Calu3 (cell line): ENCODE measurements at regions of chr14 and their contacts with region 1.

Region 1: GRCh38 chr14:37340355-37340754 is 142.6 kb downstream of the MIPOL1 start:
- DNase-seq: peak; percentile 6
- H3K4me3 Mint-ChIP-seq: no peak overlapping the region
- H3K27ac Mint-ChIP-seq: no peak overlapping the region
- H3K4me1 Mint-ChIP-seq: no peaks in the 10 kb centered on the region
- H3K27me3 Mint-ChIP-seq: no peaks in the 10 kb centered on the region
- CTCF ChIP-seq: peak; percentile 24

Region 2: GRCh38 chr14:37278636-37279538 is 61.5 kb before region 1 on chr14:
- CTCF ChIA-PET with region 1: no interaction called
- intact Hi-C with region 1: no loop called
- DNase-seq: no peak
- H3K4me3 Mint-ChIP-seq: no peak overlapping the region
- H3K27ac Mint-ChIP-seq: no peak overlapping the region
- H3K4me1 Mint-ChIP-seq: no peaks in the 10 kb centered on the region
- H3K27me3 Mint-ChIP-seq: no peaks in the 10 kb centered on the region
- CTCF ChIP-seq: no peak

Region 3: DNA sequence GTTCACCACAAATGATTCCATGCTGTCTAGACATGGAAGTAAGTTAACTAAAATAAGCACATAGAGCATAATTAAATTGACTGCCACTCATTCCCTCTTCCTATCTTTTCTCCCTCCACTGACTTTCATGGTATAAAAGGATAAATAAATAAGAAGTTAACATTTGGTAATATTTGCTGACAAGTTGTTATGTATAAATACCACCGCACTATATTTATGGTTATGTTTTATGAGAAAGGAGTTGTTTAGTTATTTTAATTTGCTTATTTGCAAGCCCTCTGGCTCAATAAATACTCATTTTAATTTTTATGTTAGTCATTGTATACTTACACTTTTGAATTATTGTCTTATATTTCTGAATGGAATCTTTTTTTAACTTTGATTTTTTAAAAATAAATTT is 29.1 kb before region 1 on chr14:
- CTCF ChIA-PET with region 1: no interaction called
- intact Hi-C with region 1: no loop called
- DNase-seq: no peak
- H3K4me3 Mint-ChIP-seq: no peak overlapping the region
- H3K27ac Mint-ChIP-seq: no peak overlapping the region
- H3K4me1 Mint-ChIP-seq: no peaks in the 10 kb centered on the region
- H3K27me3 Mint-ChIP-seq: no peaks in the 10 kb centered on the region
- CTCF ChIP-seq: no peak

Region 4: GRCh38 chr14:37515771-37516170 is 175.4 kb after region 1 on chr14:
- CTCF ChIA-PET with region 1: interaction called, 11 read pairs
- intact Hi-C with region 1: no loop called
- DNase-seq: no peak
- H3K4me3 Mint-ChIP-seq: no peak overlapping the region
- H3K27ac Mint-ChIP-seq: no peak overlapping the region
- H3K4me1 Mint-ChIP-seq: no peaks in the 10 kb centered on the region
- H3K27me3 Mint-ChIP-seq: no peaks in the 10 kb centered on the region
- CTCF ChIP-seq: no peak

Region 5: GRCh38 chr14:37526992-37527771 is 186.8 kb after region 1 on chr14:
- CTCF ChIA-PET with region 1: no interaction called
- intact Hi-C with region 1: no loop called
- DNase-seq: no peak
- H3K4me3 Mint-ChIP-seq: no peak overlapping the region
- H3K27ac Mint-ChIP-seq: no peak overlapping the region
- H3K4me1 Mint-ChIP-seq: no peaks in the 10 kb centered on the region
- H3K27me3 Mint-ChIP-seq: no peaks in the 10 kb centered on the region
- CTCF ChIP-seq: no peak